ENCODE measurements at regions of chr18 and their contacts with region 1.

Region 1: DNA sequence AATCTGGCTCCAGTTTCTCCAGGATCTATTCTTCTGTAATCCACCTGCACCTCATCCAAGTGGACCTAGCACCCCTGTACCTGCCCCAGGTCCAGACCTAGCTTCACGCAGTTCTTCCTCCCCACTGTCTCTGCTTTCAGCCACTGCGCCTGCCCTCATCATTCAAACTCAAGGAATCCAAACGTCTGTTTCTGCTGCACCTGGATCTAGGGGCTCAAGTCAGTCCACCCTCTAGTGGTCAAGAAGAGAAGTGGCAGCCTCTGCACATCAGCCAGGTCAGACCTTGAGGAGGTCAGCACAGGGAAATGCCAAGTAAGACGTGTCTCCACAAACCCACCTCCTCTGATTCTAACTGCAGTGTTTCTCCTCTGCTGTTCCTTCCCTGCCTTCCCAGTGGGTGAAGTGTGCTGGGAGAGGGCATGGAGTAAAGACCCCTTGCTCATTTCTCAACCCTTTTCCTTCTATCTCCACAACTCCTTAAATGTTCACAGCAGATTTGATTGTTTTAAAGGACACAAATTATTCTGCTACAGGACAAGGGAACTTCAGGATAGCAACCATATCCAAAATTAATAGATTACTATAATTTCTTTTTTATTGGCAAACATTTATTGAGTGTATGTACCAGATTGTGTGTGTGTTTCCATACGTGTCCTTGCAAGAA is 8.6 kb upstream of the RNF152 start:
- DNase-seq: peak; percentile 33
- ATAC-seq: peak; percentile 83

Region 2: DNA sequence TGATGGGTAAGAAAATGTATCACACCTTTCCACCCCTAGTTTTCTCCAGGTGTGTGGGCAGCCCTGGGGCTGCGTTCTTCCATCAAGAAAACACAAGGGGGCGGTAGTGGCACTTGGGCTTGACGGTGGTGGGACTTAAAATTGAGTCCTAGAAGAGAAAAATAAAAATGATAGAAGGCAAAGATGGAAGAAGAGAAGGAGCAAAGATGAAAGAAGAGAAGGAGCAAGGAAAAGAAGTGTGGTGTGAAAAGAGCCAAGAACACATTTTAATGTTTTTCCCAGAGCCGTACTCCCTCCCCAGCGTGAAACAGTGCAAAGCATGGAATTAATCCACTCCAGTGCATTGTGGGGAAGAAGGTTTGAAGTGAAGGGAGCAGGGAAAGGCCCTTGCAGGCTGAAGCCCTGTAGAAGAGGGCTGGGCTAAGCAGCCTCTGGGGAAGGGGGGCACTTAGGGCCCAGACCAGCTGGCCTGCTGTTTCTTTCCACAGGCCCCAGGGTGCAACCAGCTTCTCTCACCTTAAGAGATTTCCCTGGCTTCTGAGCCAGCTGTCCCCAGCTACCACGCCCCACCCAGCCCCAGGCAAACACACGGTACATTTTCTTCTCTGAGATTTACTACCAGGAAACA is 265.4 kb before region 1 on chr18:
- intact Hi-C with region 1: loop called (anchors 2 kb)
- DNase-seq: peak; percentile 51
- ATAC-seq: peak; percentile 87

Region 3: GRCh38 chr18:61702007-61702406 is 199.4 kb before region 1 on chr18:
- intact Hi-C with region 1: no loop called
- DNase-seq: no peak
- ATAC-seq: no peak

Region 4: GRCh38 chr18:62131301-62131909 is 229.9 kb after region 1 on chr18:
- intact Hi-C with region 1: loop called (anchors 10 kb)
- DNase-seq: peak; percentile 27
- ATAC-seq: peak; percentile 60